ENCODE measurements at regions of chr17 and their contacts with region 1.

Region 1: DNA sequence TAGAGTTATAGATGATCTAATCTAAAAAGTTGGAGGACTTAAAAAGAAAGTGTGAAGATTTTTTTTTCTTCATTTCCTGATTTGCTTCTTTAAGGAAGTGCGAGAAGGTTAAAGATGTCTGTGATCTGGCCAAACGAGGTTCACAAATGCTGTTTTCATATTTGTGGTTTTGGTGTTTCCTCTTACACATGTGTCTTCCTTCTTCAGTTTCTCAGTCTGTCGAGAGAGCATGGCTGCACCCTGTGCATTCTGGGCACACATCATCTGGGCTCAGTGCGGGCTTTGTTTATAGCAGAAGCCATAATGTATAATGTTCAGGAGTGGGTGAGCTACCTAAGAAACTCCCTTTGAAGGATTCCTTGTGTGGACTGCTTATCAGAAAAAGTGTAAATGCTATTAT is 260.4 kb upstream of the TBX2 start:
- DNase-seq: peak; percentile 76 to 81 (median 78)
- H3K4me3 ChIP-seq: no peak overlapping the region
- H3K4me3 Mint-ChIP-seq: peak overlapping the region in 7 of 8 donors; percentile 10 to 77 (median 63)
- H3K27ac ChIP-seq: no peak overlapping the region
- H3K27ac Mint-ChIP-seq: peak overlapping the region; percentile 9 to 83 (median 48)
- H3K4me1 ChIP-seq: peaks cover 23% of the 10 kb centered on the region
- H3K4me1 Mint-ChIP-seq: peaks cover 20 to 34% (median 23%) of the 10 kb centered on the region in 4 donors
- H3K27me3 ChIP-seq: no peaks in the 10 kb centered on the region
- H3K27me3 Mint-ChIP-seq: no peaks in the 10 kb centered on the region

Region 2: GRCh38 chr17:61208301-61209105 is 69.3 kb after region 1 on chr17:
- CTCF ChIA-PET with region 1: no interaction called
- POLR2A ChIA-PET with region 1: no interaction called
- intact Hi-C with region 1: no loop called
- DNase-seq: no peak
- H3K4me3 ChIP-seq: no peak overlapping the region
- H3K4me3 Mint-ChIP-seq: no peak overlapping the region
- H3K27ac ChIP-seq: no peak overlapping the region
- H3K27ac Mint-ChIP-seq: no peak overlapping the region
- H3K4me1 ChIP-seq: no peaks in the 10 kb centered on the region
- H3K4me1 Mint-ChIP-seq: no peaks in the 10 kb centered on the region
- H3K27me3 ChIP-seq: no peaks in the 10 kb centered on the region
- H3K27me3 Mint-ChIP-seq: no peaks in the 10 kb centered on the region

Region 3: DNA sequence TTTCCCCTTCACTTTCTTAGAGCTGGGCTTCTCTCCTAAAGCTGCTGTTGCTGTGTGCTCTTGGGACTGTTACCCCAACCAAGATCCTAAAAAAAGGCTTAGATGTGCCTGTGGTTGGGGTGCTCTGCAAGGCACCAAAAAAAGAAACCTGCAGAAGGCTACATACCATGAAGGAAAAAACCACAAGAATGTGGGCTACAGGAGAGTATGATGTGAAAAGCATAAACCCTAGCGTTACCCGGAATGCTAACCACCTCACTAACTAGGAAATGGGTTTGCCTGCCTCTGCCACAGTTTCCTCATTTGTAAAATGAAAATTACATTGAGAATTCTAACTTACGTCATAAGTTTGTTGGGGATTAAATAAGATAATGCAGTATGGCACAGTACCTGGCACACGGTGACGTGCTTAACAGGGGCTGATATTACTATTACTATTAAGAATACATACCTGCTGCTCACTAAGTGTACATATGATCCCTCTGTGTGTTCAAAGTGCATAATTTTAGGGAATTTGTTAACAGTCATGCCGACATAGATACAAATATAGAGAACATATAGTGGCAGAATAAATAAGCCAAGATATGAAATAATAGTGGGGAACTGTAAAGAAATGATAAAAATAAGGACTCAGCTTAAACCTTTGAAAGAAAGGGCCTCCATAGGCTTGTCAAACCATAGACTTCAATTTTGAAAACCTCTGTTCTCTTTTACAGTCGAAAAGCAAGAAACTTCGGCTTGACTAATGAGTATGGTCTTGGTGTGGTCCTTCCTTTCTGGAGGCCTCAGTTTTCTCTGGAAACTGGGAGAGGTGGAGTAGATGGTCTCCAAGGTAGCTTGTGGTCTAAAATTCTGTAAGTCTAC is 82.6 kb after region 1 on chr17:
- CTCF ChIA-PET with region 1: no interaction called
- POLR2A ChIA-PET with region 1: no interaction called
- intact Hi-C with region 1: loop called (anchors 1 kb)
- DNase-seq: peak; percentile 14 to 39 (median 16)
- H3K4me3 ChIP-seq: peak overlapping the region in 1 of 2 donors; percentile 28
- H3K4me3 Mint-ChIP-seq: peak overlapping the region; percentile 74 to 88 (median 86)
- H3K27ac ChIP-seq: peak overlapping the region; percentile 16
- H3K27ac Mint-ChIP-seq: peak overlapping the region; percentile 73 to 93 (median 84)
- H3K4me1 ChIP-seq: peaks cover 31% of the 10 kb centered on the region
- H3K4me1 Mint-ChIP-seq: peaks cover 26 to 44% (median 33%) of the 10 kb centered on the region in 4 donors
- H3K27me3 ChIP-seq: no peaks in the 10 kb centered on the region
- H3K27me3 Mint-ChIP-seq: no peaks in the 10 kb centered on the region

Region 4: DNA sequence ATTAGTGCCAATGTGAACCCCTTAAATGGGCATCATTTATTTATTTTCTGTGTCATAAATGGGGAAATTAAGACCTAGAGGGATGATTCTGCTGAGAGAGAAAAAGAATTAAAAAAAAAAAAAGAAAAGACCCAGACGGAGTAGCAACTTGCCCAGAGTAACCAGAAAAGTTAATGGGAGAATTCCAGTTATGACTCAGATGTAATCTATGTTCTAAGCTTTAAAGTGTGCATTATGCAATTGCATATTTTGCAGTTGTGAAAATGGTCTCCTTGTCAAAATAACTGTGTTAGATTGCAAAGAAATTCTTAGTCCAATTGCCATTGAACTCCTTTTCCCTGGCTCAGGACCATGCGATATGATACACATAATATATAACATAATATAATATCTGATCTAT is 221.9 kb after region 1 on chr17:
- CTCF ChIA-PET with region 1: no interaction called
- POLR2A ChIA-PET with region 1: no interaction called
- intact Hi-C with region 1: no loop called
- DNase-seq: no peak
- H3K4me3 ChIP-seq: no peak overlapping the region
- H3K4me3 Mint-ChIP-seq: no peak overlapping the region
- H3K27ac ChIP-seq: no peak overlapping the region
- H3K27ac Mint-ChIP-seq: no peak overlapping the region
- H3K4me1 ChIP-seq: no peaks in the 10 kb centered on the region
- H3K4me1 Mint-ChIP-seq: no peaks in the 10 kb centered on the region
- H3K27me3 ChIP-seq: no peaks in the 10 kb centered on the region
- H3K27me3 Mint-ChIP-seq: no peaks in the 10 kb centered on the region